ENCODE measurements at regions of chr15 and their contacts with region 1.

Region 1: DNA sequence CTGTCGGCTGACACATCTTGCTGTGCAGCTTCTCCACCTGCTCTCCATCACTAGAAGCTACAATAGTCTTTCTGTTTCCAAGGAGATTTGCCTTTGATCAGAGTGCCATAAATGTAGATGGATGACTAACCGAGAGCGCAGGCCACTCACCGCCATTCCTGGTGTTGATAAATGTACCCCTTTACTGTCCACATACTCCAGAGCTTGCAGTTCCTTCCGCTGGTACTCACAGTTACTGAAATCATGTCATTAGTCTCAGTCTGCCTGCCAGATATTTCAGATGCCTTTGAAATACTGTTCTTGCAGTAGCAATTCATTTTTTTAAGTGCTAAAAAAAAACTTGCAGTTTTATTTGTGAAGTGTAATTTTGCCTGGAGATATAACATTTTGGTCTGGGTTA is 72.3 kb downstream of the BLM start:
- DNase-seq: no peak
- H3K4me3 ChIP-seq: no peak overlapping the region
- H3K27ac ChIP-seq: no peak overlapping the region
- H3K4me1 ChIP-seq: peaks cover 39% of the 10 kb centered on the region
- CTCF ChIP-seq: no peak

Region 2: DNA sequence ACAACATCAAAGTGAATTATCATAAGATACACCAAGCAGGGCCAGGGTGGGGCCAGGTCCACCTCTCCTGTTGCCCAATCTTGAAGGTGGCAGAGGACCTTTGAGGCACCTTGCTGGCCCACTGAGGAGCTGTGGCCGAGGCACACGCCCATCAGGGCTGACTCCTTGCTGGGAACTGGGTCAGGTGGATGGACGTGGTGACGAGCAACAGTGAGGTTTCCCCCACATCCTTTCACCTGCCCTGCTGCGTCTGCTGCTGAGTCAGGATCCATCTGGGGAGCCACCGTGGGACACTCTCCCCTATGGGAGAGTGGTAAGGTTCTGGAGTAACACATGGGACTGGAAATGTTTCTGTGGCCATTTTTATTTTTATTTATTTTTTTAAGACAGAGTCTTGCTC is 61.7 kb after region 1 on chr15:
- CTCF ChIA-PET with region 1: no interaction called
- POLR2A ChIA-PET with region 1: no interaction called
- intact Hi-C with region 1: loop called (anchors 2 kb)
- DNase-seq: no peak
- H3K4me3 ChIP-seq: no peak overlapping the region
- H3K27ac ChIP-seq: no peak overlapping the region
- H3K4me1 ChIP-seq: peaks cover 55% of the 10 kb centered on the region
- CTCF ChIP-seq: no peak

Region 3: GRCh38 chr15:90869601-90870353 is 80.3 kb after region 1 on chr15:
- CTCF ChIA-PET with region 1: no interaction called
- POLR2A ChIA-PET with region 1: no interaction called
- intact Hi-C with region 1: loop called (anchors 5 kb)
- DNase-seq: peak; percentile 40
- H3K4me3 ChIP-seq: no peak overlapping the region
- H3K27ac ChIP-seq: no peak overlapping the region
- H3K4me1 ChIP-seq: peaks cover 36% of the 10 kb centered on the region
- CTCF ChIP-seq: no peak